ENCODE measurements at regions of chr1 and their contacts with region 1.

Region 1: DNA sequence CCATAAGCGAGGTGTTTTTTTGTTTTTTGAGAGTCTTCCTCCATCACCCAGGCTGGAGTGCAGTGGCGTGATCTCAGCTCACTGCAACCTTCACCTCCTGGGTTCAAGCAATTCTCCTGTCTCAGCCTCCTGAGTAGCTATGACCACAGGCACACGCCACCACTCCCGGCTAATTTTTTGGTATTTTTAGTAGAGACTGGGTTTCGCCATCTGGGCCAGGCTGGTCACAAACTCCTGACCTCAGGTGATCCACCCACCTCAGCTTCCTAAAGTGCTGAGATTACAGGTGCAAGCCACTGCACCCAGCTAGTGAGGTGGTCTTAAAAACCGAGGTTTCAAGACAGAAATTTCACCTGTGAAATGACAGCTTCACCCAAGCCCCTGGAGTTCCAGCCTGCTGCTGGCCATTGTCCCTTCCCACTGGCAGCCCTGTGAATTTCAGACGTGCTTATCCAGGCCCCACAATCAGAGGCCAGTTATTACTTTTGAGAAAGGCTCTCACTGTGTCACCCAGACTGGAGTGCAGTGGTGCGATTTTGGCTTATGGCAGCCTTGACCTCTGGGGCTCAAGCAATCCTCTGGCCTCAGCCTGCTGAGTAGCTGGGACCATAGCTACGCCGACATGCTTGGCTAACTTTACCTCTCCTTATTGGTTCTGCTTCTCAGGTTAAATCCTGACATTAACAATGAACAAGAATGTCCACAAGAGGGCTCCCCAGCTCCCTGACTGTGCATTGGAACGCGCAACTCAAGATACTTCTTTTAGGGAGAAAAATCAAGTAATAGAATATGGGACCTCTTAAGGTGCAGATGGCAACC is 19.4 kb downstream of the ENO1 start:
- DNase-seq: no peak
- ATAC-seq: peak in 3 of 4 donors; percentile 17 to 35 (median 26)
- H3K4me3 ChIP-seq: no peak overlapping the region
- H3K27ac ChIP-seq: peak overlapping the region in 10 of 12 donors; percentile 6 to 64 (median 43)
- H3K4me1 ChIP-seq: peaks cover 0 to 29% (median 22%) of the 10 kb centered on the region in 12 donors
- H3K27me3 ChIP-seq: no peaks in the 10 kb centered on the region
- CTCF ChIP-seq: peak; percentile 41 to 79 (median 61)
- POLR2A ChIP-seq: no peak

Region 2: GRCh38 chr1:7975212-7975865 is 883.8 kb before region 1 on chr1:
- intact Hi-C with region 1: loop called in 2 of 10 experiments (anchors 5 to 10 kb)
- DNase-seq: peak in 4 of 5 donors; percentile 60 to 74 (median 64)
- ATAC-seq: peak; percentile 92 to 96 (median 94)
- H3K4me3 ChIP-seq: no peak overlapping the region
- H3K27ac ChIP-seq: no peak overlapping the region
- H3K4me1 ChIP-seq: peaks cover 0 to 10% (median 1%) of the 10 kb centered on the region in 12 donors
- H3K27me3 ChIP-seq: no peaks in the 10 kb centered on the region
- CTCF ChIP-seq: peak; percentile 65 to 89 (median 82)
- POLR2A ChIP-seq: no peak

Region 3: DNA sequence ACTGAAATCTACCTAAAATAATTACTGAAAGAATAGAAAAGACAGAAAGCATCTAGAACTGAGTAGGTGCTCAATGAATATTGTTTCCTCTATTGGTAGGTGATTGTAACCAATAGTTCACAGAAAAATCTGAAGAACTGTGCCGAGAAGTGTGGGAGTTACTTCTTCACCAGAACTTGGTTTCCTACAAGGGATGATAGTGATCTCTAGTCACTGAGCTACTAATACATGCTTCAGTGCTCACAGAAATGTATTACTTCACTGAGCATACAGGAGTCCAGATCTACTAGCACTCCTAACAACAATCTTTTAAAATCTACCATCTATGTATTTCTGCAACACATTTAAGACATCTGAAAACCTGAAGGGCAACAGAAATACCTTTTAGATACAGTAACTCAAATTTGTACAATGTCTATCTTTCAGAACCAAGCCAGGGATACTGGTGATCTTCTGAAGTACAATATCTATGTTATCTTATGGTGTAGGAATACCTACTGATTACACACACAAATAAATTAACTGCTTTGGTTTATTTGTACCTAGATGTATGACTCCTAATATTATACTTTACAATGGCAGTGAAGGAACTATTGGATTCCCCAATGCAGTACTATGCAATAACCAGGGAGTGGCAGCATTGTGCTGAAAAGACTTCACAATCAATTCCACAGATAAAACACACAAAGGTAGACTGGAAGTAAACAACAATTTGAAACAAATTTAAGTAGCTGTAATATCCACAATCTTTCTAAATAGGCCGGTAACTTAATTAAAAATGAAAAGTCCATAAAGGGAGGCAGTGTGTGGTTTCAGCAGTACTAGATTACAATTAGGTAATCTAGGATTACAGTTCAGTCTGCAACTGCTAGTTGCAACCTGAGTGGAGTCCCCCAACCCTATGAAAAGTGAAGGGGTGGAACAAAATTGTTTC is 298.2 kb before region 1 on chr1:
- intact Hi-C with region 1: loop called in 2 of 10 experiments (anchors 5 kb)
- DNase-seq: peak in 2 of 5 donors; percentile 21 to 26
- ATAC-seq: peak in 3 of 4 donors; percentile 63 to 79 (median 69)
- H3K4me3 ChIP-seq: no peak overlapping the region
- H3K27ac ChIP-seq: no peak overlapping the region
- H3K4me1 ChIP-seq: peaks cover 0 to 26% (median 13%) of the 10 kb centered on the region in 12 donors
- H3K27me3 ChIP-seq: no peaks in the 10 kb centered on the region
- CTCF ChIP-seq: peak; percentile 85 to 99 (median 95)
- POLR2A ChIP-seq: no peak

Region 4: DNA sequence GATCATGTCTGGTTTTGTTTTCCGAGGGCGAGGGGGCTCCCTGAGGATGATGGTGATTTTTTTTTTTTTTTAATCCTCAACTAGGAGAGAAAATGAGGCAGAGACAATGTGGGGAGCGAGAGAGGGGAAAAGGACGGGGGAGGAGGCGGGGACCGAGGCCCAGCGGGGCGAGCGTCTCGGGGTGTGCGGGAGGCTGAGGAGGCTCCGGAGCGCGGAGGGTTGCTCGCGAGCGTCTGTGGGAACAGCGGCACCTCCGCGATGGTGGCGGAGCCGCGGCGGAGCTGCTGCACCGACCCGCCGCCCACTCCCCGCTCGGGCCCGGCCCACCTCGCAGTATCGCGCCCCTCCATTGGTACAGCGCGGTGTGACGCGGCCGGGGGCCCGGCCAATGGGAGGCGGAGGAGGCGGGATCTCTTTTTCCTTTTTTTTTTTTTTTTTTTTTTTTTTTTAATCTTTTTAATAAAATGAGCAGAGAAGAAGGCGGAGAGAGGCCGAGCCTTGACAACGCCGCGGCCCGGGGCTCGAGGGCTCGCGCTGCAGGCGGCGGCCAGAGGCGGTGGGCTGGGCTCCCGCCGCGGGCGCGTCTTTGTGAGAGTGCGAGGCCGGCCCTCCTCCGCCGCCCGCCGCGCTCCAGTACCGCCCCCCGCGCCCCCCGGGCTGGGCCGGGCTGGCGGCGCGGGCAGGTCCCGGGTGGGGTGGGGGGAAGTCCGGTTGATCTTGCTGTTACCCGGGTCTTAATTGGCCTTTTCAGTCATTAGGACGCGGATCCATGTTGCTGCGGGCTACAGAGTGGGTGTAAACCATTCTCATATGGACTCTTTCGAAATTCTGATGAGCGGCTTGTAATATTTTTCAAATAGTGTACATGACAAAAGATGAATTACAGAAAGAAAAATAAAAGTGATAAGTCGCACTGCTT is 41.4 kb before region 1 on chr1 and contains the start of gene RERE:
- intact Hi-C with region 1: loop called in 2 of 10 experiments (anchors 5 kb)
- DNase-seq: peak; percentile 94 to 98 (median 94)
- ATAC-seq: peak; percentile 98 to 99 (median 99)
- H3K4me3 ChIP-seq: peak within 1 kb of the TSS; percentile 49 to 90 (median 78)
- H3K27ac ChIP-seq: peak within 1 kb of the TSS; percentile 85 to 96 (median 94)
- H3K4me1 ChIP-seq: peaks cover 0 to 59% (median 33%) of the 10 kb centered on the region in 12 donors
- H3K27me3 ChIP-seq: no peaks in the 10 kb centered on the region
- CTCF ChIP-seq: peak in 3 of 12 donors; percentile 14 to 26 (median 25)
- POLR2A ChIP-seq: peak in 1 of 2 donors; percentile 95
- total RNA-seq, gene RERE: 65.9 to 236 (median 135) TPM

Region 5: GRCh38 chr1:8987881-8988617 is 129.0 kb after region 1 on chr1:
- intact Hi-C with region 1: loop called in 4 of 10 experiments (anchors 2 to 5 kb)
- DNase-seq: peak in 4 of 5 donors; percentile 36 to 52 (median 48)
- ATAC-seq: peak in 3 of 4 donors; percentile 50 to 58 (median 56)
- H3K4me3 ChIP-seq: no peak overlapping the region
- H3K27ac ChIP-seq: peak overlapping the region in 1 of 12 donors; percentile 12
- H3K4me1 ChIP-seq: peaks cover 0 to 25% (median 8%) of the 10 kb centered on the region in 12 donors
- H3K27me3 ChIP-seq: no peaks in the 10 kb centered on the region
- CTCF ChIP-seq: peak; percentile 85 to 97 (median 93)
- POLR2A ChIP-seq: no peak

Measured in heart left ventricle (tissue), 16 donors.